Dendritic cell treated with granulocyte-macrophage colony-stimulating factor and Interleukin-4, amounts not matched to agents 40 ng/mL and 50 ng/mL, for 4 days (primary cell): ENCODE measurements at regions of chr5 and their contacts with region 1.

Region 1: GRCh38 chr5:164013077-164013670 is 507.8 kb downstream of the MAT2B start:
- H3K4me3 Mint-ChIP-seq: no peak overlapping the region
- H3K27ac Mint-ChIP-seq: no peak overlapping the region
- H3K4me1 Mint-ChIP-seq: no peaks in the 10 kb centered on the region
- H3K27me3 Mint-ChIP-seq: no peaks in the 10 kb centered on the region

Region 2: GRCh38 chr5:163564321-163564938 is 448.7 kb before region 1 on chr5:
- intact Hi-C with region 1: loop called (anchors 5 kb)
- H3K4me3 Mint-ChIP-seq: no peak overlapping the region
- H3K27ac Mint-ChIP-seq: no peak overlapping the region
- H3K4me1 Mint-ChIP-seq: peaks cover 16% of the 10 kb centered on the region
- H3K27me3 Mint-ChIP-seq: peaks cover 44% of the 10 kb centered on the region

Region 3: DNA sequence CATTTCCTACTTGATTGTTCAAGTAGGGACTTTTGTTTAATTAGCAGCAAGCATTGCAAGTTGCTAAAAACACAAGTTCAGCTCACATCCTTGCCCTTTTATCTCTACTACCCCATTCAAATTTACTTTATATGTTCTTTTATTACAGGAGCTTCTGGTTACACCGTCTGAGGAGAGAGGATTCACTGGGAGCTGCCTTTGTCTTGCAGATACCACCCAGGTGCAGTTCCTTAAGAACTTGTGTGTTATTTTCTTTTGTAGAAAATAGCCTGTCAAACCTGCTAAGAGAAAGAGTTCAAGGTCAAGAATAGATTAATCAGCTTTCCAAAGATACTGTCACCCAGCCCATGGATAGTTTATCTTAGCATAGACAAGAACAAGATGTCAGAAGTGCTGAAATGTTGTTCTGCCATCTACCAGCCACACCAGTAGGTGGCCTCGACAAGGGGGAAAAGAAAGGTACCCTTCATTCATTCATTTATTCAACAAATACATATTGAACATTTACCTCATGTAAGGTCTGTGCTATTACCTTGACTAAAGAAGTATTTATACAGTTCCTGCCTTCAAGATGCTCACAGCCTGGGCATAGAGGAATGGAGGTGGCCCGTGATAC is 242.5 kb after region 1 on chr5:
- intact Hi-C with region 1: no loop called
- H3K4me3 Mint-ChIP-seq: no peak overlapping the region
- H3K27ac Mint-ChIP-seq: no peak overlapping the region
- H3K4me1 Mint-ChIP-seq: no peaks in the 10 kb centered on the region
- H3K27me3 Mint-ChIP-seq: no peaks in the 10 kb centered on the region

Region 4: GRCh38 chr5:164504141-164504772 is 491.1 kb after region 1 on chr5:
- intact Hi-C with region 1: loop called (anchors 1 kb)
- H3K4me3 Mint-ChIP-seq: no peak overlapping the region
- H3K27ac Mint-ChIP-seq: no peak overlapping the region
- H3K4me1 Mint-ChIP-seq: no peaks in the 10 kb centered on the region
- H3K27me3 Mint-ChIP-seq: no peaks in the 10 kb centered on the region

Region 5: GRCh38 chr5:165457859-165458481 is 1444.8 kb after region 1 on chr5:
- intact Hi-C with region 1: loop called (anchors 5 kb)
- H3K4me3 Mint-ChIP-seq: no peak overlapping the region
- H3K27ac Mint-ChIP-seq: no peak overlapping the region
- H3K4me1 Mint-ChIP-seq: no peaks in the 10 kb centered on the region
- H3K27me3 Mint-ChIP-seq: no peaks in the 10 kb centered on the region